CD4-positive, alpha-beta memory T cell (primary cell): ENCODE measurements at regions of chr18 and their contacts with region 1.

Region 1: GRCh38 chr18:47997338-47997780 is 66.9 kb upstream of the SMAD2 start:
- DNase-seq: peak in 1 of 5 donors; percentile 11
- H3K4me3 ChIP-seq: no peak overlapping the region
- H3K4me3 Mint-ChIP-seq: no peak overlapping the region
- H3K27ac ChIP-seq: no peak overlapping the region
- H3K27ac Mint-ChIP-seq: no peak overlapping the region
- H3K4me1 ChIP-seq: no peaks in the 10 kb centered on the region
- H3K4me1 Mint-ChIP-seq: no peaks in the 10 kb centered on the region
- H3K27me3 ChIP-seq: no peaks in the 10 kb centered on the region
- H3K27me3 Mint-ChIP-seq: peaks cover 0 to 4% of the 10 kb centered on the region in 2 donors

Region 2: GRCh38 chr18:47772374-47773248 is 224.7 kb before region 1 on chr18:
- CTCF ChIA-PET with region 1: interaction called, 11 read pairs
- POLR2A ChIA-PET with region 1: no interaction called
- intact Hi-C with region 1: no loop called
- DNase-seq: peak in 4 of 5 donors; percentile 37 to 48 (median 38)
- H3K4me3 ChIP-seq: no peak overlapping the region
- H3K4me3 Mint-ChIP-seq: no peak overlapping the region
- H3K27ac ChIP-seq: no peak overlapping the region
- H3K27ac Mint-ChIP-seq: no peak overlapping the region
- H3K4me1 ChIP-seq: peaks cover 6% of the 10 kb centered on the region
- H3K4me1 Mint-ChIP-seq: peaks cover 0 to 4% (median 0%) of the 10 kb centered on the region in 4 donors
- H3K27me3 ChIP-seq: no peaks in the 10 kb centered on the region
- H3K27me3 Mint-ChIP-seq: peaks cover 1 to 13% of the 10 kb centered on the region in 2 donors

Region 3: GRCh38 chr18:48007955-48008701 is 10.8 kb after region 1 on chr18:
- CTCF ChIA-PET with region 1: interaction called, 12 read pairs
- POLR2A ChIA-PET with region 1: no interaction called
- intact Hi-C with region 1: no loop called
- DNase-seq: peak; percentile 8 to 48 (median 23)
- H3K4me3 ChIP-seq: peak overlapping the region in 1 of 2 donors; percentile 31
- H3K4me3 Mint-ChIP-seq: peak overlapping the region; percentile 65 to 81 (median 79)
- H3K27ac ChIP-seq: no peak overlapping the region
- H3K27ac Mint-ChIP-seq: no peak overlapping the region
- H3K4me1 ChIP-seq: peaks cover 13% of the 10 kb centered on the region
- H3K4me1 Mint-ChIP-seq: peaks cover 0 to 12% (median 4%) of the 10 kb centered on the region in 4 donors
- H3K27me3 ChIP-seq: no peaks in the 10 kb centered on the region
- H3K27me3 Mint-ChIP-seq: peaks cover 16 to 23% of the 10 kb centered on the region in 2 donors